ENCODE measurements at regions of chr14 and their contacts with region 1.

Region 1: DNA sequence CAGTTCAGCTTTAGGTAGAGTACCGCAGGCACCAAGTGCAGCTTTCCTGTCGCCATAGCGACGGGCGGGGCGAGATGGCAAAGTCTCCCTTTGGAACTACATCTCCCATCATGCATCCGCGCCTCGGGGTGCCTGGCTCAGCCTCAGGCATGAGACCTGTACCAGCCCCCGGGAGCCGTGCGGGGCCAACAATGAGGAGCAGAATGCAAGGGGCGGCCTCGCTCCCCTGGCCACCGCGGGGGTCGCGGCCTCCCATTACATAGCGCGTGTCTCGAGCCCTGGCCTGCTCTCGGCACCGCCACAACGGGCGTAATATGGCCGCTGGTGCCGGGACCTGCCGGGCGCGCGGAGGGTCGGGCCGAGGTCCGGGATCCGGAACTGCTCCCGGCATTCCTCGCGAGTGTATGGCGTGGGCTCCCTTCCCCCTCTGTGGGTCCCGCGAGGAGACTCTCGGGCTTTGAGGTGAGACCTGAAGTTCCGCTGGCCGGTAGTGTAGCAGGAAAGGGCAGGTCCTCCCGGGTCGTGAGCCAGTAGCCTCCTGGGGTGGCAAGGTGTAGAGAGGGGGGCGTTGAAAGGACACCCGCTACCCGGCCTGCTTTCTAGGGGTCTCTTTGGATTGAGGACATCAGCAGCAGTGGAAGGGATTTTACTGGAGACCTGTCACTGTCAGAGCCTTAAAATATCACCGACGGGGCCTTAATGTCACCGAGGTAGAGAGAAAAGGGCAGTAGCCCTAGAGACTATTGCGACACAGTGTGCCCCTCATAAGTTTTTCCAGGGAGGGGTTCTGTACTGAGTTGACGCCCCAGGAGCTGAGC is at the start of gene THTPA:
- DNase-seq: peak in 1 of 2 experiments; percentile 95
- H3K4me3 ChIP-seq: peak within 1 kb of the TSS; percentile 56 to 87 (median 80)
- H3K27ac ChIP-seq: peak within 1 kb of the TSS; percentile 56; the same call in 1 of the 2 replicates
- H3K4me1 ChIP-seq: peaks cover 0 to 19% (median 11%) of the 10 kb centered on the region in 4 experiments; a peak in 6 of 7 replicates
- H3K27me3 ChIP-seq: no peaks in the 10 kb centered on the region
- CTCF ChIP-seq: no peak
- EP300 ChIP-seq: no peak
- POLR2A ChIP-seq: peak in 1 of 2 experiments; percentile 68; a peak in 2 of 3 replicates
- RAD21 ChIP-seq: no peak
- total RNA-seq, gene THTPA: 14.8 and 16.6 TPM in 2 replicates

Region 2: GRCh38 chr14:23344442-23344841 is 211.6 kb before region 1 on chr14:
- CTCF ChIA-PET with region 1: interaction called, 14 read pairs
- POLR2A ChIA-PET with region 1: no interaction called
- DNase-seq: no peak
- H3K4me3 ChIP-seq: no peak overlapping the region
- H3K27ac ChIP-seq: no peak overlapping the region
- H3K4me1 ChIP-seq: peaks cover 0 to 4% (median 1%) of the 10 kb centered on the region in 4 experiments; a peak in 3 of 7 replicates
- H3K27me3 ChIP-seq: no peaks in the 10 kb centered on the region
- CTCF ChIP-seq: no peak
- EP300 ChIP-seq: no peak
- POLR2A ChIP-seq: no peak
- RAD21 ChIP-seq: no peak

Region 3: DNA sequence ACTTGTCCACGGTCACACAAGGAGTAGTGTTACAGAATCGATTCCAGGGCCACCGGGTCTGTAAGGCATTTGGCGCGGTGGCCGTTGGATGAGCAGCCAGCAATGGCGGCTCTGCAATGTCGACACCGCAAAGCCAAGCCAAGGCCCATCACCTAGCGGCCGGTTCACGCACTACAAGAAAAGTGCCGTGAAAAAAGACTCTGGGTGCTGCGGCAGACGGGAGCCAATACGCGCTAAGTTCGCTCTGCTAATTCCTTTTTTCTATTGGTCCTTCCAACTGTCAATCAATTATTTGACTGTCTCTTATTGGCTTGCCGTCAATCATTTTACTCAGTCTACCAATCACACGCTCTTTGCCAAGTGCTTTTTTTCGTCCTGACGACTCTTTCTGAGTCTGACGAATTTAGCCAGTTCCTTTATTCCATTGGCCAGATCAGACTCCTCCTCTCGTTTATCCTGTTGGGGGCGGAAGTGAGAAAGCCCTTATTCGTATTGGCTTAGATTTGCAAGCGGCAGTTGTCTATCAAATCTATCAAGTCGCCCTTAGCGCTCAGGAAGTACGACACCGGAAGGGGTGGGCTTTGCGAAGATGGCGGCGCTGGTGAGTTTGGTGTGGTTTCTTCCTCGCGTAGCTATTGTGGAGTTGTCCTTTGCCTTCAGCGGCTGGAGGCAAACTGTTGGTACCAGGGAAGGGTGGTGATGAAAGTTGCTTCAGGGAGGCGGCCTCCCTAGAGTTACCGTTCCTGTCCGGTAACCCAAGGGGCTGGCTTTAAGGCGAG is 86.8 kb before region 1 on chr14 and contains the start of gene NGDN:
- CTCF ChIA-PET with region 1: interaction called, 2,092 read pairs
- POLR2A ChIA-PET with region 1: interaction called, 944 read pairs
- DNase-seq: peak; percentile 94 to 96
- H3K4me3 ChIP-seq: peak within 1 kb of the TSS; percentile 89 to 97 (median 96)
- H3K27ac ChIP-seq: peak within 1 kb of the TSS; percentile 79
- H3K4me1 ChIP-seq: peaks cover 0 to 3% (median 0%) of the 10 kb centered on the region in 4 experiments; a peak in 1 of 7 replicates
- H3K27me3 ChIP-seq: no peaks in the 10 kb centered on the region
- CTCF ChIP-seq: peak; percentile 74 to 85 (median 80)
- EP300 ChIP-seq: no peak
- POLR2A ChIP-seq: peak; percentile 79 to 85
- RAD21 ChIP-seq: peak; percentile 65 to 68
- total RNA-seq, gene NGDN: 48.8 and 56.0 TPM in 2 replicates

Region 4: DNA sequence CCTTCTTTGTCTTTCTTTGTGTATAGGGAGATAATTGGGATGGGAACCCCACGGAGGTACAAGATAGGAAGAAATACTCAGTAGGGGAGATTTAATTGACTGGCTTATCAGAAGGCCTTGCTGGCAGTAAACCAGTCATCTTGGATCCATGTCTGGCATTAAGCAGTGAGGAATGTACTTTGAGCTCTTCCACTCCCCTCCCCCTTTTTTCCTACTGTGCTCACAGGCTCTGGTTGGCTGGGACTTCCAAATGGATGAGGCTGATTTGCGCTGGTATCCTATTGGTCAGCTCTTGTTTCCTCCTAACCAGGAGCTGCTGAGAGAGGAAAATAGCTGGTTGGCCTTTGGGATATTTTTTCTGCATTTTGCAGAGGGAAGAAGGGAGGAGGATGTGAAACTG is 61.9 kb before region 1 on chr14:
- CTCF ChIA-PET with region 1: interaction called, 2,092 read pairs
- POLR2A ChIA-PET with region 1: interaction called, 944 read pairs
- DNase-seq: peak in 1 of 2 experiments; percentile 58
- H3K4me3 ChIP-seq: peak overlapping the region in 2 of 4 experiments; percentile 2 to 30; a peak in 3 of 8 replicates
- H3K27ac ChIP-seq: no peak overlapping the region; the same call in 1 of the 2 replicates
- H3K4me1 ChIP-seq: peaks cover 7 to 12% (median 8%) of the 10 kb centered on the region in 4 experiments
- H3K27me3 ChIP-seq: no peaks in the 10 kb centered on the region
- CTCF ChIP-seq: no peak
- EP300 ChIP-seq: no peak
- POLR2A ChIP-seq: 0 out of 3 replicates have a peak, but pooled peaks of 1 of the 2 experiments have one; percentile 39
- RAD21 ChIP-seq: no peak

Region 5: DNA sequence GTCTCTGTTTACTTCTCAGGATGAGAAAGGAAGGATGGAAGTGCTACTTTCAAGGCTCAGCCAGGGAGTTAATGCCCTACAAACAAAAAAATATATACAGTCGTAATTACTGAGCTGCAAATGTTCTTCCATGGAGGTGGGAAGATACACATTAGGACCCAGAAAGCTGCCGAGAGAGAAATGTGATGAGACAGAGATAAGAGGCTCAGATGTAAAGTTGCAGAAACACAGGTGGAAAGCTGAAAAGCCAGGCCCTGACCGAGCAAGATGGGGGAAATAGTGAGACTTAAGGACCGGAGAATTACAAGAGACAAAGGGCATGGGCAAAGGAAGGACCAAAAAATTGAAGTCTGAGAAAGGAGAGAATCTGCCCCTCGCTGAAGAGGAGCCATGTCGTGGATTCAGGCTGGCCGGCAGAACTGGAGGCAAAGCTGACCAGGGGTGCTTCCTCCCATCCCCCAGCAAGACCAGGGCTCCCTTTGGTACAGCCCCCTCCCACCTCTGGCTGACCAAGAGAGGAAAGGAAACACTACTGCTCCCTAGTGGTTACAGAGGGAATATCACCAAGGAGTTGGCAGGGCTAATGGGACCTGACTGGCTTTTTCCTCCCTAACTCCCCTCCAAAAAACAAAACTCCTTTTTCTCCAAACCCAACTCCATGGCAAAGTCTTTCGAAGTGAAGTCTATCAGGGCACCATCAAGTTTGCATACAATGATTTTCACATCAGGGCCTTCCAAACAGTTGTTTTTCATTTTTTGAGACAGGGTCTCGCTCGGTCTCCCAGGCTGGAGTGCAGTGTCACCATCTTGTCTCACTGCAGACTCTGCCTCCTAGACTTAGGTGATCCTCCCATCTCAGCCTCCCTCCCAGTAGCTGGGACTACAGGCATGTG is 16.6 kb before region 1 on chr14:
- CTCF ChIA-PET with region 1: interaction called, 1,314 read pairs
- POLR2A ChIA-PET with region 1: interaction called, 1,523 read pairs
- DNase-seq: peak in 1 of 2 experiments; percentile 79
- H3K4me3 ChIP-seq: peak overlapping the region; percentile 42 to 72 (median 58); a peak in 7 of 8 replicates
- H3K27ac ChIP-seq: peak overlapping the region; percentile 97
- H3K4me1 ChIP-seq: peaks cover 9 to 25% (median 18%) of the 10 kb centered on the region in 4 experiments
- H3K27me3 ChIP-seq: no peaks in the 10 kb centered on the region
- CTCF ChIP-seq: peak; percentile 52 to 92 (median 85)
- EP300 ChIP-seq: peak in 1 of 2 experiments; percentile 59; a peak in 1 of 3 replicates
- POLR2A ChIP-seq: peak; percentile 76 to 83
- RAD21 ChIP-seq: peak; percentile 73 to 87

Region 6: DNA sequence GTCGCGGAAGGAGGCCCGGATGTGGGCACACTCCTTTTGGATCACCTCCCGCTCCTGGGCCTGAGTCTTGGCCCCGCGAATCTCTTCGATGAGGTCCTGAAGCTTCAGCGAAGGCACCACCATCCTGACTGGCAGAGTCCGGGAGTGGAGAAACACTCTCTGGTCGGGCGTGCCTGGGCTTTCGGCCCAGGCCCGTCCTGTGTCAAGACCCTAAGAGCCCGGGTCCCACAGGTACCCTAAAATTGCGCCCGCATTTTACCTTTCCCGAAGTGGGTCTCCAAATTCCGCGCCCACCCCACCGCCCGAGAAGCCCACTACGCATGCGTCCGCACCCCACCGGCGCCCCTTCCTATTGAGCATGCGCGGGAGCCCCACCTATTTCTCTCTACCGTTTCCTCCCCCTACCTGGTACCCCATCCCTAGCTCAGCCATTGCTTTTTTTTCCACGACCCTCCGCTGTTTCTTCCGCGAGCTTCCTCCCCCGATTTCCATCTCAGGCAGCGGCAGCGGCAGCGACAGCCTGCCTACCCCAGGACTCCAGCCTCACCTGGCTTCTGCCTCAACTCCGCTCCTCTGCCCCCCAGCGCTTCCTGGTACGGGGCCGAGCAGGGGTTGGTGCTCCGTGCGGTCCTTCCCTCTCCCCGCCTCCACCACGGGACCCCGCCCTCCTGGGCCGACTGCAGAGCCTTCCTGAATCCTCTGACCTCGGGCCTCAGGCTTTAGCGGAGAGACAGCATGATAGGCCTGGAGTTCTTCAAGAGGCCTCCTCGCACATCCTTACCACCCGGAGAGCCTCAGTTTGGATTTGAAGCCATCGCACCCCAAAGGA is 11.3 kb after region 1 on chr14 and contains the start of gene AP1G2:
- CTCF ChIA-PET with region 1: interaction called, 11 read pairs
- POLR2A ChIA-PET with region 1: interaction called, 1,523 read pairs
- DNase-seq: peak in 1 of 2 experiments; percentile 91
- H3K4me3 ChIP-seq: peak within 1 kb of the TSS; percentile 52 to 81 (median 67)
- H3K27ac ChIP-seq: peak within 1 kb of the TSS; percentile 51
- H3K4me1 ChIP-seq: peaks cover 8 to 21% (median 11%) of the 10 kb centered on the region in 4 experiments
- H3K27me3 ChIP-seq: no peaks in the 10 kb centered on the region
- CTCF ChIP-seq: no peak
- EP300 ChIP-seq: no peak
- POLR2A ChIP-seq: peak; percentile 38 to 86
- RAD21 ChIP-seq: no peak
- total RNA-seq, gene AP1G2: 70.1 and 70.9 TPM in 2 replicates

Measured in H1 (cell line).